Sigmoid colon (tissue), 7 donors: ENCODE measurements at regions of chr17 and their contacts with region 1.

Region 1: DNA sequence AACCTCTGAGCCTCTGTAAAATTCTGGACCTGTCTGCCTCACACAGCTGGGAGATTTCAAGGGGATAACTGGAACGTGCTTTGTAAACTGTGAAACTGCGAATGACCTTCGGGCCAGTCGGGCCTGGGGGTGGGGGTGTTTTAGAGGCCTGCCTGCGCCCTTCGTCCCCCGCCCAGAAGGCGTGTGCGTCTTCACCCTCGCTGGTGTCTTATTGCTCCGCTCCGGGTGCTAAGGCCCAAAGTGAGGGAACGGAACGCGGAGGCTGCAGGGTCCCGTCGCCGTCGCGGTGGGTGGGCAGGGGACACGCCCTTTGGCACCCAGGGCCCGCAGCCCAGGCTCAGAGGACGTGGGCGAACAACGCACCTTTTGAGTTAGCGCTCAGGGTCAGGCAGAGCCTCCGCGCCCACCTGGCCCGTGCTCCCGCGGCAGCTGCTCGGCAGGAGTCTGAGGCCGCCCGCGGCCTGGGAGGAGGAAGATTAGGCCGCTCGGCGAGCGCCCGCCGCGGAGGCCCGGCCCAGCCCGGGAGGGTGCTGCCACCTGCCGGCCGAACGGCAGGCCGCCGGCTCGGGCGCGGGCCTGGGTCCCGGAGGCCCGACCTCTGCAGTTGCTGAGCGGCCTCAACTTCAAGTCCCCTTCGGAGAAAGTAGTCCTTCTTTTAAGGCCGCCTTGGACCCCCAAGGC is 29.7 kb downstream of the DCAKD start:
- DNase-seq: peak; percentile 89
- H3K4me3 ChIP-seq: peak overlapping the region; percentile 18 to 49 (median 38)
- H3K27ac ChIP-seq: peak overlapping the region; percentile 82 to 89 (median 83)
- H3K4me1 ChIP-seq: peaks cover 5 to 47% (median 41%) of the 10 kb centered on the region in 4 donors
- H3K27me3 ChIP-seq: no peaks in the 10 kb centered on the region
- CTCF ChIP-seq: peak; percentile 34 to 95 (median 58)
- EP300 ChIP-seq: no peak
- POLR2A ChIP-seq: no peak

Region 2: DNA sequence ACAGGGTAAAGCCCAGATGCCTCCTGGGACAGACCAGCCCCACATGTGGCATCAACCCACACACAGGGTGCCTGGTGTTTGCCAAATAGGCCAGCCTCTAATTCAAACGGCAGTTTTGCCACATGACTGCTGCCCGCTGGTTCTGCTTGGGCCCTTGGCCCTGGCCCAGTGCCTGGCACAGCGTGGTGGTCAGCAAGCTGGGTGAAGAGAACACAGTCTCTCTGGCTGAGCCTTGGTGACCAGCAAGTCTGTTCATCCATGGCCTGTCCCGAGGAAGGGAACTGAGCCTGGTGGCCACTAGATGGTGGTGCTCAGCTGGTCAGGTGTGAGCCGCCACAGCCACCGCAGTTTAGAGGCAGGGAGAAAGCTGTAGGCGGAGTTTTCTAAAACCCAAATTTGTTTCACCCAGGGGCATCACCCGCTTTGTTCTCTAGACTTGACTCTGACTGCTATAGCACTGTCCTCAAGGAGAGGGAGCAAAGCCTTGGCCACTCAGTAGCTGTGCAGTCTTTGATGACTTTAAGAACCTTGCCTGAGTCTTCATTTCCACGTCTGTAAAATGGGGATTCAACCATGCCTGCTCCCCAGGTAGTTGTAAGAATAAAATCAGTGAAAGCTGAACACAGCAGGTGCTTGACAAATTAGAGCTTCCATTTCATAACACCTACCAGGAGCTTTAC is 101.7 kb before region 1 on chr17:
- intact Hi-C with region 1: loop called (anchors 1 kb)
- DNase-seq: peak; percentile 94
- H3K4me3 ChIP-seq: no peak overlapping the region
- H3K27ac ChIP-seq: no peak overlapping the region
- H3K4me1 ChIP-seq: peaks cover 0 to 23% (median 20%) of the 10 kb centered on the region in 4 donors
- H3K27me3 ChIP-seq: no peaks in the 10 kb centered on the region
- CTCF ChIP-seq: peak; percentile 79 to 91 (median 89)
- EP300 ChIP-seq: no peak
- POLR2A ChIP-seq: no peak

Region 3: GRCh38 chr17:44956998-44957981 is 64.5 kb before region 1 on chr17:
- intact Hi-C with region 1: no loop called
- DNase-seq: peak; percentile 29
- H3K4me3 ChIP-seq: no peak overlapping the region
- H3K27ac ChIP-seq: no peak overlapping the region
- H3K4me1 ChIP-seq: peaks cover 0 to 11% (median 9%) of the 10 kb centered on the region in 4 donors
- H3K27me3 ChIP-seq: peaks cover 0 to 23% (median 8%) of the 10 kb centered on the region in 3 donors
- CTCF ChIP-seq: no peak
- EP300 ChIP-seq: no peak
- POLR2A ChIP-seq: no peak

Region 4: DNA sequence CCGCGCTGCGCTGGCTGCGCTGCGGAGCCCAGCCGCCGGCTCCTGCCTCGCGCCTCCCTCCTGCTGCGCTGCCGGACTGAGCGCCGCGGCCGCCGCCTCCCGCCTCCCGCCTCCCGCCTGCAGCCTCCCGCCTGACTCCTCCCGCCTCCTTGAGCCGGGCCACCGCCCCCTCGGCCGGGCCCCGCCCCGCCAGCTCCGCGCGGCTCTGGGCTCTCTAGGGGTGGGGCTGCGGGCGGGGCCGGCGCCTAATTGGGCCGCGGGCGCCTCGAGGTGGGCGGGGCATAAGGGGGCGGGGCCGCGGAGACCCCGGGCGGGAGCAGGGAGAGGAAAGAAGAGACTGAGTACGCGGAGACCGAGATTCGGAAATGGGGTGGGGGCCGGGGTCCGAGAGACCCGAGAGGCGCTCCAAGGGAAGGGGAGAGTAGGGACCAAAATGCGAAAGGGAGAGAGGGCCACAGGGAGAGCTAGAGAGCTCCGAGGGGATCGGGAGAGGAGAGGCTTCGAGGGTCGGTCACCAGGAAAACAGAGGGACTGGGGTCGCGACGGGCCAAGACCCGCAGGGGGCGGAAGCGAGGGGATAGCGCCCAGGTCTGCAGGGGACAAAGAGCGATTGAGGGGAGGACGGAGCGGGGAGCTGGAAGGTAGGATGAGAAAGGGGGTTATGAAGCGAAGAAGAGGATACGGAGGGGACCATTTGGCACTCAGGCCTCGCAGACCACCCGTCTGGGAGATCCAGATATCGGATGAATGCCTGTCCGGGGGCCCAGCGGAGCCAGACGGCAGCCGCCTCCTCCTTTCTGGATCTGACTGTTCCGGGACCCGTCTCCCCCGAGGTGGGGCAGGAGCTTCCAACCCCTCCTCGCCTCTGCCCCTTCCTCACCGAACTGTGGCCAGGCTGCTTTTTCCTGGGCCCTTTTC is 53.3 kb before region 1 on chr17 and contains the start of gene C1QL1:
- intact Hi-C with region 1: loop called (anchors 2 kb)
- DNase-seq: peak; percentile 96
- H3K4me3 ChIP-seq: peak within 1 kb of the TSS; percentile 42 to 50 (median 48)
- H3K27ac ChIP-seq: peak within 1 kb of the TSS; percentile 20 to 83 (median 67)
- H3K4me1 ChIP-seq: peaks cover 0 to 40% (median 33%) of the 10 kb centered on the region in 4 donors
- H3K27me3 ChIP-seq: peaks cover 19 to 33% (median 29%) of the 10 kb centered on the region in 3 donors
- CTCF ChIP-seq: peak in 1 of 4 experiments; percentile 11
- EP300 ChIP-seq: no peak
- POLR2A ChIP-seq: peak in 1 of 2 donors; percentile 39
- total RNA-seq, gene C1QL1: 0.41 to 4.3 (median 1.3) TPM

Region 5: GRCh38 chr17:45032174-45032541 is 10.4 kb after region 1 on chr17:
- intact Hi-C with region 1: no loop called
- DNase-seq: no peak
- H3K4me3 ChIP-seq: no peak overlapping the region
- H3K27ac ChIP-seq: no peak overlapping the region
- H3K4me1 ChIP-seq: no peaks in the 10 kb centered on the region
- H3K27me3 ChIP-seq: no peaks in the 10 kb centered on the region
- CTCF ChIP-seq: no peak
- EP300 ChIP-seq: no peak
- POLR2A ChIP-seq: no peak

Region 6: DNA sequence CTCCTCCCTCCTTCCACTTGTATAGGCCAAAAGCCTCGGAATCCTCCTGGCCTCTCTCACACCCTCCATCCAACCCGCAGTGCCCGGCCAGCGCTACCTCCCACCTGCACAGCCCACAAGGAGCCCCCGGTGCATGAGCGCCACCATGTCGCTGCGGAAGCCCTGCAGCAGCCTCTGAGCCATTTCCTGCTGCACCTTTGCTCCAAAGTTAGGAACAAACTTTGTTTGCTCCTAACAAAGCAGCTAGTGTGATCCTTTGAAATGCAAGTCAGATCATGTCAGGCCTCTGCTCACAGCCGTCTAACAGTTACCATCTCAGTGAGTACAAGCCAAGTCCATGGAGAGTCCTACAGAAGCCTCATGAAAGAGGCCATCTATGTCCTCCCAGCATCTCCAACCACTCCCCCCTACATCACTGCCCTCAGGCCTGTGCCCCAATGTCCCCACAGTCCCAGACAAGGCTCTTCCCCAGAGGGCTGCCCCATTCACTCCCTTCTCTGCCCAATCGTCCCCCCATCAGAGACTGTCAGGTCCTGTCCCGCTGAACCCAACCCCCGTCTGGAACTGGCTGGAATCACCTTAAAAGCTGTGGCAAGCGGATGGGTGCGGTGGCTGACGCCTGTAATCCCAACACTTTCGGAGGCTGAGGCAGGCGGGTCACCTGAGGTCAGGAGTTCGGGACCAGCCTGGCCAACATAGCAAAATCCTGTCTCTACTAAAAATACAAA is 22.2 kb after region 1 on chr17:
- intact Hi-C with region 1: loop called (anchors 2 kb)
- DNase-seq: no peak
- H3K4me3 ChIP-seq: no peak overlapping the region
- H3K27ac ChIP-seq: peak overlapping the region; percentile 41 to 59 (median 48)
- H3K4me1 ChIP-seq: peaks cover 0 to 54% (median 29%) of the 10 kb centered on the region in 4 donors
- H3K27me3 ChIP-seq: no peaks in the 10 kb centered on the region
- CTCF ChIP-seq: no peak
- EP300 ChIP-seq: no peak
- POLR2A ChIP-seq: no peak

Region 7: GRCh38 chr17:45135192-45135977 is 113.6 kb after region 1 on chr17 and contains the start of gene ACBD4:
- intact Hi-C with region 1: loop called (anchors 2 kb)
- DNase-seq: peak; percentile 98
- H3K4me3 ChIP-seq: peak within 1 kb of the TSS; percentile 58 to 72 (median 61)
- H3K27ac ChIP-seq: peak within 1 kb of the TSS; percentile 84 to 89 (median 88)
- H3K4me1 ChIP-seq: peaks cover 0 to 39% (median 29%) of the 10 kb centered on the region in 4 donors
- H3K27me3 ChIP-seq: no peaks in the 10 kb centered on the region
- CTCF ChIP-seq: peak; percentile 99 to 100 (median 100)
- EP300 ChIP-seq: no peak
- POLR2A ChIP-seq: peak; percentile 63 to 85
- total RNA-seq, gene ACBD4: 20.0 to 24.9 (median 21.9) TPM